Esophagus squamous epithelium (tissue), 5 donors: ENCODE measurements at regions of chr17 and their contacts with region 1.

Region 1: GRCh38 chr17:81094509-81095382 is 59.8 kb downstream of the BAIAP2 start:
- DNase-seq: no peak
- H3K4me3 ChIP-seq: peak overlapping the region in 2 of 4 donors; percentile 1 to 41
- H3K27ac ChIP-seq: peak overlapping the region; percentile 89 to 93 (median 93)
- H3K4me1 ChIP-seq: peaks cover 81 to 96% (median 83%) of the 10 kb centered on the region in 3 donors
- H3K27me3 ChIP-seq: no peaks in the 10 kb centered on the region
- CTCF ChIP-seq: no peak
- POLR2A ChIP-seq: no peak

Region 2: GRCh38 chr17:81020767-81021497 is 73.8 kb before region 1 on chr17:
- intact Hi-C with region 1: loop called (anchors 10 kb)
- DNase-seq: no peak
- H3K4me3 ChIP-seq: peak overlapping the region in 1 of 4 donors; percentile 23
- H3K27ac ChIP-seq: peak overlapping the region; percentile 52 to 79 (median 76)
- H3K4me1 ChIP-seq: peaks cover 31 to 73% (median 42%) of the 10 kb centered on the region in 3 donors
- H3K27me3 ChIP-seq: peaks cover 0 to 15% (median 0%) of the 10 kb centered on the region in 4 donors
- CTCF ChIP-seq: no peak
- POLR2A ChIP-seq: no peak